MCF 10A (cell line): ENCODE measurements at regions of chr11 and their contacts with region 1.

Region 1: GRCh38 chr11:44556735-44557409 is 8.6 kb upstream of the CD82 start:
- DNase-seq: peak; percentile 72
- H3K4me3 Mint-ChIP-seq: no peak overlapping the region
- H3K27ac Mint-ChIP-seq: no peak overlapping the region
- H3K4me1 Mint-ChIP-seq: peaks cover 23% of the 10 kb centered on the region
- H3K27me3 Mint-ChIP-seq: no peaks in the 10 kb centered on the region
- CTCF ChIP-seq: peak; percentile 71

Region 2: GRCh38 chr11:43459246-43459645 is 1097.6 kb before region 1 on chr11:
- CTCF ChIA-PET with region 1: no interaction called
- POLR2A ChIA-PET with region 1: no interaction called
- intact Hi-C with region 1: no loop called
- DNase-seq: no peak
- H3K4me3 Mint-ChIP-seq: no peak overlapping the region
- H3K27ac Mint-ChIP-seq: no peak overlapping the region
- H3K4me1 Mint-ChIP-seq: no peaks in the 10 kb centered on the region
- H3K27me3 Mint-ChIP-seq: no peaks in the 10 kb centered on the region
- CTCF ChIP-seq: no peak

Region 3: GRCh38 chr11:44574610-44575287 is 17.9 kb after region 1 on chr11:
- CTCF ChIA-PET with region 1: interaction called, 21 read pairs
- POLR2A ChIA-PET with region 1: no interaction called
- intact Hi-C with region 1: no loop called
- DNase-seq: peak; percentile 86
- H3K4me3 Mint-ChIP-seq: no peak overlapping the region
- H3K27ac Mint-ChIP-seq: peak overlapping the region; percentile 51
- H3K4me1 Mint-ChIP-seq: peaks cover 31% of the 10 kb centered on the region
- H3K27me3 Mint-ChIP-seq: no peaks in the 10 kb centered on the region
- CTCF ChIP-seq: no peak

Region 4: DNA sequence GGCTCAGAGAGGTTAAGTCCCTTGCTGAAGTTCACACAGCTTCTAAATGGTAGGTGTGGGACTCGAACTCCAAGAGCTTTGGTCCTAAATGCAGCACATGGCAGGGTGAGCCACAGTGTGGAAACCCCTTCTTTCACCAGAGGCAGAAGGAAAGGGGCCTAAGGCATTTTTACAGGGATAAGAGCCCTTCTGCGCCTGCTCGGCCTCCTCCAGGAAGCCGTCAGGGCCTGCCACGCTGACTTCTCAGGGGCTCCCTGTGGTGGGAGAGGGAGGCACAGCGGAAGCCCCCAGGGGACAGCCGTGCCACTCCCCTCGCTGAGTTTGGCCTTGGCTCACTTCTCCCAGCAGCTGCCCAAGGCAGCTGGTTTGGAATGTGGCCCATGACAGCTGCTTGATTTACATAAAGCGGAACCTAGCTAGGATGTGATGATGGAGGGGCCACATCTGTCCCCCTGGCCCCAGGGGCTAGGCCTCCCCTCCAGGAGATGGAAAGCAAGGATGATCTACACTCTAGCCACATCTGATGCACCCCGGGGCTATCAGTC is 44.0 kb after region 1 on chr11:
- CTCF ChIA-PET with region 1: interaction called, 16 read pairs
- POLR2A ChIA-PET with region 1: no interaction called
- intact Hi-C with region 1: no loop called
- DNase-seq: no peak
- H3K4me3 Mint-ChIP-seq: no peak overlapping the region
- H3K27ac Mint-ChIP-seq: no peak overlapping the region
- H3K4me1 Mint-ChIP-seq: peaks cover 18% of the 10 kb centered on the region
- H3K27me3 Mint-ChIP-seq: no peaks in the 10 kb centered on the region
- CTCF ChIP-seq: no peak

Region 5: DNA sequence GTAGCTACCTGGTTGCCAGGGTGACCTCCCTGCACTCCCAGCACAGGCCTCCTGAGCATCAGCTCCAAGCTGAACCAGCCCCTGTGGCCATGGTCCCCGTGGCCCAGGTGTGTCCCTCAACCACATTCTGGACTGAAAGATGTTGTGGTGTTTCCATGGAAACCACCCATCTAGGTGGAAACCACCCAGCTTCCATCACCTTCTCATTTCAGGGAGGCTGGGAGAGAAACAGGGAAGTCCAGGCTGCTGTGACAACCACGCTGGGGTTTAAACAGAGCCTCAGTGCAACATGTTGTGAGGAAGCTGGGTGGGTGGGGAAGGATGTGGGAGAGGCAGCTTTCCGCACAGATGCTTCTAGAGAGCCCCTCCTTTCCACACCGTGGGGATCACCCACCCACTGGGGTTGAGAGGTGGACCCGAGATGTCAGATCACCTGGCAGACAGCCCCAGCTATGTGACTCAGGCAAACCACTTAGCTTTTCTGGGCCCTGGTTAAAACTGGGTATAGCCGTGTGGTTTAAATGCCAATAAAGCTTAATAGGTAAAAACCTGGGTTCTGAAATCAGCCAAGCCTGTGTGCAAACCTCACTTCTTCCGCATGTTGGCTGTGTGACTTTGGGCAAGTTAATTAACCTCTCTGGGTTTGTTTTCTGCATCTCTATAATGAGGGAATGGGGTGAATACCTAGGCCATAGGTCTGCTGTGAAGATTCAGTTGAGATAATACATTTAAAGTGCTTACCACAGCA is 55.0 kb after region 1 on chr11:
- CTCF ChIA-PET with region 1: interaction called, 64 read pairs
- POLR2A ChIA-PET with region 1: interaction called, 28 read pairs
- intact Hi-C with region 1: loop called (anchors 1 kb)
- DNase-seq: no peak
- H3K4me3 Mint-ChIP-seq: no peak overlapping the region
- H3K27ac Mint-ChIP-seq: no peak overlapping the region
- H3K4me1 Mint-ChIP-seq: peaks cover 7% of the 10 kb centered on the region
- H3K27me3 Mint-ChIP-seq: no peaks in the 10 kb centered on the region
- CTCF ChIP-seq: no peak

Region 6: DNA sequence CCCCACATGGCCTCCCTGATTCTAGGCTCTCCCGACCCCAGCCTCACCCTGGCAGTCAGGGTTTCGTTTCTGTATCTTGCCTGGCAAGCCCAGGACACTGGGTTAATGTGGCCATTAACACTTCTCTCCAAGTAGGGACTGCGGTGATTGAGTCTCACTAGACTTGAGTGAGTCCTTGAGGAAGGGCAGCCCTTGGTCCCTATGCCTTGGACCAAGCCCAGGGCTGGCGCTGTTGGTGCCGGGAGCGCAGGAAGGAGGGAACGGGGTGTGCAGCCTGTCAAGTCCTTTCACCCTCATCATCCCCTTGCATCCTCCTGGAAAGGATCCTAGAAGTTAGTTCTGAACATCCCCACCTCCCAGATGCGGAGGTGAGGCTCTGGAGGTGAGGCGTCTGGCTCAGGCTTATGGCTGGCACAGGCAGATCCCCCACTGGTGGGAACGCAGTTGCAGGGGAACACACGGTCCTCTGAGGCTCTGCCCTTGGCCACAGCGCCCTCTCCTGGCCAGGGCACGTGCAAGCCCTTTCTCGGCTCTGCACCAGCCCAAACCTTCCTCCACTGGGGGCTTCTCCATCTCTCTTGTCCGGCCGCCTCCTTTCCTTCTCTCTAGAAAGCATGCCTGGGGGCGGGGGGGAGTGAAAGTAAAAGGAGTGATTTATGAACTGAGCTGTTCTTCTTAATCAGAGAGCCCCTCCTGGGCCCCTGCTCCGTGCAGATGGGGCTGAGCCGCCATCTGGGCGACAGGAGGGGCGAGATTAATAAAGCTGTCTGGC is 337.2 kb after region 1 on chr11:
- CTCF ChIA-PET with region 1: interaction called, 6 read pairs
- POLR2A ChIA-PET with region 1: no interaction called
- intact Hi-C with region 1: loop called (anchors 5 kb)
- DNase-seq: peak; percentile 54
- H3K4me3 Mint-ChIP-seq: no peak overlapping the region
- H3K27ac Mint-ChIP-seq: no peak overlapping the region
- H3K4me1 Mint-ChIP-seq: no peaks in the 10 kb centered on the region
- H3K27me3 Mint-ChIP-seq: peaks cover 35% of the 10 kb centered on the region
- CTCF ChIP-seq: peak; percentile 96

Region 7: GRCh38 chr11:44911029-44911814 is 354.4 kb after region 1 on chr11:
- CTCF ChIA-PET with region 1: interaction called, 57 read pairs
- POLR2A ChIA-PET with region 1: interaction called, 5 read pairs
- intact Hi-C with region 1: loop called (anchors 5 kb)
- DNase-seq: peak; percentile 82
- H3K4me3 Mint-ChIP-seq: no peak overlapping the region
- H3K27ac Mint-ChIP-seq: no peak overlapping the region
- H3K4me1 Mint-ChIP-seq: no peaks in the 10 kb centered on the region
- H3K27me3 Mint-ChIP-seq: no peaks in the 10 kb centered on the region
- CTCF ChIP-seq: peak; percentile 79